IMR-90 (cell line): ENCODE measurements at regions of chr14 and their contacts with region 1.

Region 1: GRCh38 chr14:42624980-42625761 is 1018.5 kb downstream of the LRFN5 start:
- DNase-seq: no peak
- ATAC-seq: no peak
- H3K4me3 ChIP-seq: no peak overlapping the region
- H3K27ac ChIP-seq: no peak overlapping the region
- H3K4me1 ChIP-seq: no peaks in the 10 kb centered on the region
- H3K27me3 ChIP-seq: no peaks in the 10 kb centered on the region
- CTCF ChIP-seq: no peak
- POLR2A ChIP-seq: no peak
- RAD21 ChIP-seq: no peak

Region 2: DNA sequence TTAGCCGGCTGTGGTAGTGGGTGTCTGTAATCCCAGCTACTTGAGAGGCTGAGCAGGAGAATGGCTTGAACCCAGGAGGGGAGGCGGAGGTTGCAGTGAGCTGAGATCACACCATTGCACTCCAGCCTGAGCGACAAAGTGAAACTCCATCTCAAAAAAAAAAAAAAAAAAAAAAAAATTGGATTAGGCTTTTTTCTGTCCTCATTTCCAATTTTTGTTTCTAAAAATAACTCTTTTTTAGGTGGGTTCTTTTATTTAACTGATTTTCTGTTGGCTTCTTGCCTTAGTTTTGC is 154.8 kb before region 1 on chr14:
- CTCF ChIA-PET with region 1: no interaction called
- POLR2A ChIA-PET with region 1: interaction called, 11 read pairs
- dilution Hi-C with region 1: no loop called
- in situ Hi-C with region 1: no loop called
- intact Hi-C with region 1: no loop called
- DNase-seq: no peak
- ATAC-seq: no peak
- H3K4me3 ChIP-seq: no peak overlapping the region
- H3K27ac ChIP-seq: no peak overlapping the region
- H3K4me1 ChIP-seq: no peaks in the 10 kb centered on the region
- H3K27me3 ChIP-seq: no peaks in the 10 kb centered on the region
- CTCF ChIP-seq: no peak
- POLR2A ChIP-seq: no peak
- RAD21 ChIP-seq: no peak